ENCODE measurements at regions of chr15 and their contacts with region 1.

Region 1: DNA sequence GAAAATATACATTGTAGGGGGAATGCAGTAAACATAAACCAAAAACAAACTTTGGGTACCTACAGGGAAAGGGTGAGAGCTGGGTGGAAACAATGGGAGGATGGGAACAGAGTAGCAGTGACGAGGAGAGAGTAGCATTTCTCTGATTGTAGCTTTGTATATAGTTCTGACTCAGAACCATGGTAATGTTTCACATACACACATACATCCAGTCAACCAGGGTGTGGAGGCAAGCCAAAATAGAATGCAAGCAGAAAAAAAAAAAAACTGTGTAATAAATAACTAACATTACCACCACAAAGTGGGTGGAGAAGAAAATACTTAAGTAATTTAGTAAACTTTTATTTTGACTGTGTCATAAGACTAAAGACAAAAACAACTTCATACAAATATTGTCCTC is 27.2 kb downstream of the BCL2A1 start:
- H3K4me3 Mint-ChIP-seq: no peak overlapping the region
- H3K27ac Mint-ChIP-seq: no peak overlapping the region
- H3K4me1 Mint-ChIP-seq: peaks cover 26% of the 10 kb centered on the region
- H3K27me3 Mint-ChIP-seq: peaks cover 80% of the 10 kb centered on the region

Region 2: DNA sequence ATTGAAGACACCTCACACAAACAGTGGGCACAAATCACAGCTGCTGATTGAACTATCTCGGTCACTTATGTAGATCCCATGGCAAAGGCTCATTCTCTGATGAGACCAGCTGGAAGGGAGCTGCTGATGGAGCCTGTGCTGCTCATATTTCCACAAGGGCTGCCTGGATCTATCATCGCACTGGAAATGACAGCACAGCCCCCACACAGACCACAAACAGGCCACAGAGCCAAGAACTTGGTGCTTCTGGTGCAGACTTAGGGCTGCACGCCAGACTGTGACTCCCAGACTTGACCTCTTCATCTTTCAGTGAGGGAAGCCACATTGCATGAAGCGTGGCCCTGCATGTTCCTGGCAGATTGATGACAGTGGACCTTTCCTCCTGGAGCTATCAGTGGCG is 314.1 kb before region 1 on chr15:
- intact Hi-C with region 1: no loop called
- H3K4me3 Mint-ChIP-seq: no peak overlapping the region
- H3K27ac Mint-ChIP-seq: no peak overlapping the region
- H3K4me1 Mint-ChIP-seq: no peaks in the 10 kb centered on the region
- H3K27me3 Mint-ChIP-seq: peaks cover 14% of the 10 kb centered on the region

Region 3: GRCh38 chr15:79978655-79979514 is 35.1 kb after region 1 on chr15:
- intact Hi-C with region 1: loop called (anchors 5 kb)
- H3K4me3 Mint-ChIP-seq: peak overlapping the region; percentile 10
- H3K27ac Mint-ChIP-seq: peak overlapping the region; percentile 88
- H3K4me1 Mint-ChIP-seq: peaks cover 57% of the 10 kb centered on the region
- H3K27me3 Mint-ChIP-seq: peaks cover 59% of the 10 kb centered on the region

Region 4: GRCh38 chr15:79989682-79990081 is 45.9 kb after region 1 on chr15:
- intact Hi-C with region 1: loop called (anchors 5 kb)
- H3K4me3 Mint-ChIP-seq: no peak overlapping the region
- H3K27ac Mint-ChIP-seq: no peak overlapping the region
- H3K4me1 Mint-ChIP-seq: peaks cover 31% of the 10 kb centered on the region
- H3K27me3 Mint-ChIP-seq: peaks cover 67% of the 10 kb centered on the region

Measured in dendritic cell treated with granulocyte-macrophage colony-stimulating factor and Interleukin-4, amounts not matched to agents 40 ng/mL and 50 ng/mL, for 4 days (primary cell).